ENCODE measurements at regions of chr17 and their contacts with region 1.

Region 1: GRCh38 chr17:80970044-80970761 is 21.4 kb upstream of the CHMP6 start:
- DNase-seq: peak in 3 of 5 donors; percentile 65 to 73 (median 67)
- ATAC-seq: peak; percentile 69 to 80 (median 73)
- H3K4me3 ChIP-seq: no peak overlapping the region
- H3K27ac ChIP-seq: peak overlapping the region in 1 of 12 donors; percentile 68
- H3K4me1 ChIP-seq: peaks cover 0 to 27% (median 18%) of the 10 kb centered on the region in 12 donors
- H3K27me3 ChIP-seq: peaks cover 0 to 20% (median 7%) of the 10 kb centered on the region in 9 donors
- CTCF ChIP-seq: peak; percentile 35 to 68 (median 53)
- POLR2A ChIP-seq: no peak

Region 2: DNA sequence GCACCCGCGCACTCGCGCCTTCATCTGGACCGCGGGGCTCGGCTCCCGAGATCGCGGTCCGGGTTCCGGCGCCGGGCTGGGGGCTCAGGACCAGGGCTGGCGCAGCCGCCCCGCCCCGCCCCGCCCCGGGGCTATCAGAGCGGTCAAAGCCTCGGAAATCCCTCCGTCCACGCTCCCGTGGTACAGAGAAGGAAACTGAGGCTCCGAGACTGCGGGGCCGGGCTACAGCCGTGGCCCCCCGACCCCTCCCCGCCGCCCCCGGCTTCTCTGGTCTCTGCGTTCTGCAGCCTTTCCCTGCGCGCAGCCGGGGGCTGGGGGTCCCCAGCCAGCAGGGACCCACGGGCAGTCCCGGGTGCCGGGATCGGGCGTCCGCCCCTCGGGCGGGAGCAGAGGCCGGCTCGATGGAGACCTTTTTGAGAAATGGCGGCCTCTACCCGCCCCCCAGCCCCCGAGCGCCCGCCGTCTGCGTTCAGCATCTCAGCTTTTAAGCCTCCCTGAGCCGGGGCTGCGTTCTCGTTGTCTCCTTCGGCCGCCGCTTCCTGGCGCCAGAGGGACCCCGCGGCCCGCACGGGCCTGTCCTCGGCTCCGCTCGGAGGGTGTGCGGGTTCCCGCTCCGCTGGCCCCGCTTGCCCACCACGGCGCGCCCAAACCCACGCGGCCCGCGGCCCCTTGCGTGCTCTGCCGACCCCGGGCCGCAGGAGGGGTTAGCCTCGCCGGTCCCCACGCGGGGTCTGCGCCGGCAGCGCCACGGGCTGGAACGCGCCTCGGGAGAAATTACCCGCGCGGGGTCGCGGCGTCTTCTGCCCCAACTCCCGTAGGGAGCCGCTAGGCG is 492.3 kb before region 1 on chr17:
- intact Hi-C with region 1: loop called in 1 of 10 experiments (anchors 5 kb)
- DNase-seq: no peak
- ATAC-seq: peak in 3 of 4 donors; percentile 57 to 78 (median 67)
- H3K4me3 ChIP-seq: peak overlapping the region in 11 of 12 donors; percentile 8 to 43 (median 34)
- H3K27ac ChIP-seq: no peak overlapping the region
- H3K4me1 ChIP-seq: peaks cover 0 to 49% (median 31%) of the 10 kb centered on the region in 12 donors
- H3K27me3 ChIP-seq: peaks cover 73 to 100% (median 95%) of the 10 kb centered on the region in 9 donors
- CTCF ChIP-seq: peak in 10 of 12 donors; percentile 14 to 62 (median 40)
- POLR2A ChIP-seq: no peak

Region 3: GRCh38 chr17:80575057-80575875 is 394.9 kb before region 1 on chr17:
- intact Hi-C with region 1: loop called in 1 of 10 experiments (anchors 10 kb)
- DNase-seq: peak; percentile 68 to 90 (median 74)
- ATAC-seq: peak in 3 of 4 donors; percentile 84 to 89 (median 86)
- H3K4me3 ChIP-seq: no peak overlapping the region
- H3K27ac ChIP-seq: no peak overlapping the region
- H3K4me1 ChIP-seq: no peaks in the 10 kb centered on the region
- H3K27me3 ChIP-seq: no peaks in the 10 kb centered on the region
- CTCF ChIP-seq: peak; percentile 80 to 100 (median 90)
- POLR2A ChIP-seq: no peak

Region 4: GRCh38 chr17:80619535-80620312 is 350.5 kb before region 1 on chr17:
- intact Hi-C with region 1: no loop called
- DNase-seq: no peak
- ATAC-seq: no peak
- H3K4me3 ChIP-seq: no peak overlapping the region
- H3K27ac ChIP-seq: no peak overlapping the region
- H3K4me1 ChIP-seq: peaks cover 0 to 9% (median 0%) of the 10 kb centered on the region in 12 donors
- H3K27me3 ChIP-seq: no peaks in the 10 kb centered on the region
- CTCF ChIP-seq: no peak
- POLR2A ChIP-seq: no peak

Region 5: GRCh38 chr17:80866147-80866793 is 103.9 kb before region 1 on chr17:
- intact Hi-C with region 1: loop called in 7 of 10 experiments (anchors 5 to 10 kb)
- DNase-seq: peak; percentile 49 to 81 (median 58)
- ATAC-seq: peak in 3 of 4 donors; percentile 69 to 80 (median 77)
- H3K4me3 ChIP-seq: no peak overlapping the region
- H3K27ac ChIP-seq: no peak overlapping the region
- H3K4me1 ChIP-seq: peaks cover 0 to 21% (median 2%) of the 10 kb centered on the region in 12 donors
- H3K27me3 ChIP-seq: no peaks in the 10 kb centered on the region
- CTCF ChIP-seq: peak; percentile 58 to 90 (median 74)
- POLR2A ChIP-seq: no peak

Region 6: GRCh38 chr17:80873284-80873951 is 96.8 kb before region 1 on chr17:
- intact Hi-C with region 1: loop called in 7 of 10 experiments (anchors 5 to 10 kb)
- DNase-seq: peak in 2 of 5 donors; percentile 53 to 55
- ATAC-seq: peak; percentile 49 to 77 (median 68)
- H3K4me3 ChIP-seq: no peak overlapping the region
- H3K27ac ChIP-seq: peak overlapping the region in 1 of 12 donors; percentile 30
- H3K4me1 ChIP-seq: peaks cover 0 to 46% (median 24%) of the 10 kb centered on the region in 12 donors
- H3K27me3 ChIP-seq: no peaks in the 10 kb centered on the region
- CTCF ChIP-seq: no peak
- POLR2A ChIP-seq: no peak

Region 7: GRCh38 chr17:80942421-80943345 is 27.5 kb before region 1 on chr17:
- intact Hi-C with region 1: no loop called
- DNase-seq: peak; percentile 86 to 94 (median 90)
- ATAC-seq: peak in 3 of 4 donors; percentile 85 to 94 (median 92)
- H3K4me3 ChIP-seq: peak overlapping the region in 1 of 12 donors; percentile 16
- H3K27ac ChIP-seq: peak overlapping the region in 2 of 12 donors; percentile 8 to 89
- H3K4me1 ChIP-seq: peaks cover 0 to 35% (median 14%) of the 10 kb centered on the region in 12 donors
- H3K27me3 ChIP-seq: no peaks in the 10 kb centered on the region
- CTCF ChIP-seq: peak in 6 of 12 donors; percentile 6 to 42 (median 29)
- POLR2A ChIP-seq: no peak

Region 8: DNA sequence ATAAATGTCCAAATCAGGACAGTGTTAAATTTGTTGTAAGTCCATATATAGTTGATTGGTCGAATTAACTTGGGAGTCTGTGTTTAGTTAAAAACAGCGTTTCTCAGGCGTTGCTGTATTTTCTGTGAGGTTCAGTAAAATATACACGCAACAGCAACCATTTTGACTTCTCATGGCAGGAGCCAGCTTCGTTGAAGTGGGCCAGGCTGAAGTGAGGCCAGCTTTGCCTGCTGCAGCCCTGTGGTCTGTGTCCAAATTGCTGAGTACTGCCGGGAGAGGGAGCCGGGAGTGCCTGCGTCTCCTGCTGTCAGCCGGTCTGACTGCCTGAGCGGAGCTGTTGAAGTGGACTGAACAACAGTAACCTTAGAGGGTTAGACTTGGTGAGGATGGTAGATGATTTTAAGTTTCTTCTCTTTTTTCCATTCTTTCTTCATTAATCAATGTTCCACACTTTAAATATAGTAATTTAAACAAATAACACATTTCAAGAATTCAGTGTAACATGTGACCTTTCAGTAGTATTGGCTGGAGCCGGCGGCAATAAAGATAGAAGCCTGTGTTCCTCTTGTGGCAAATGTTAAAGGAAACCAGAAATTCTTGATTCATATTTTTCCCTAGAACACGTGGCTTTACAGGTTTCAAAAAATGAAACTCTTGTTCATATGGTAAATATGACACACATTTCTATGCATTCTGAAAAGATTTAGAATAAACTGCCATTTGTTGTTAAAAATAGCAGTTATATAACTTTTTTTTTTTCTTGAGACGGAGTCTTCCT is 1906.6 kb after region 1 on chr17:
- intact Hi-C with region 1: no loop called
- DNase-seq: peak in 4 of 5 donors; percentile 81 to 91 (median 86)
- ATAC-seq: peak; percentile 92 to 96 (median 94)
- H3K4me3 ChIP-seq: no peak overlapping the region
- H3K27ac ChIP-seq: peak overlapping the region in 11 of 12 donors; percentile 36 to 78 (median 70)
- H3K4me1 ChIP-seq: peaks cover 3 to 77% (median 37%) of the 10 kb centered on the region in 12 donors
- H3K27me3 ChIP-seq: no peaks in the 10 kb centered on the region
- CTCF ChIP-seq: peak; percentile 30 to 76 (median 48)
- POLR2A ChIP-seq: no peak

Measured in heart left ventricle (tissue), 16 donors.